Left cardiac atrium (tissue), 4 donors: ENCODE measurements at regions of chr5 and their contacts with region 1.

Region 1: DNA sequence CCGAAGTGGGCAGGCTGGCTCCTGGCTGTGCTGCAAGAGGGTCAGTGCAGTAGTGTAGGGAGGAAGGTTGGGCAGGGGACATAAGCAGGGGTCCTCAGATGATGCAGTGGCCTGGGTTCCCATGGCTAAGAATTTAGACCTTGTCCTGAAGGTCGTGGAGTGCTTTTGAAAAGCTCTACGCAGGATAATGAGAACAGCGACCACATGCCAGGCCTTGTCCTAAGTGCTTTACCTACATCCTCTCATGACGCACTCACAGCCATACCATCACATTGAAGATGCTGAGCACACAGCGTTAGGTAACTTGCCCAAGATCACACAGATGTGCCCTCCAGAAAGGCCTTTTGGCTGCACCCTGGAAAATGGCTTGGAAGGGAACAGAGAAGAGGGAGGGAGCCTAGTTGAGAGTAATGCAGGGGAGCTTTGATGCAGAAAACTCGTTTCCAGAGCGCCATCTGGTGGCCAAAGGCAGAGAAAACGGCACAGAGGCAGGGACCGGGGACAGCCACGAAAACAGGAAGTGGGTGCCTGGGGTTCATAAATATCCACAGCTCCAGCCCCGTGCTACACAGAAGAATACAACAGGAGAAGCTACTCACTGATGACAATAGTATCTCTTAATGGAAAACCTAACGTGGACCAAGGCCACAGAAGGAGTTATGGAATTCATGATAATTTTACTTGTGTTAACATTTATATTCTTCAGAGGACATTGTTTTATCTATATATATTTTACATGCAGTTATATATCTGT is 2.6 kb upstream of the PCDH12 start:
- DNase-seq: peak; percentile 90
- ATAC-seq: peak; percentile 84 to 92

Region 2: DNA sequence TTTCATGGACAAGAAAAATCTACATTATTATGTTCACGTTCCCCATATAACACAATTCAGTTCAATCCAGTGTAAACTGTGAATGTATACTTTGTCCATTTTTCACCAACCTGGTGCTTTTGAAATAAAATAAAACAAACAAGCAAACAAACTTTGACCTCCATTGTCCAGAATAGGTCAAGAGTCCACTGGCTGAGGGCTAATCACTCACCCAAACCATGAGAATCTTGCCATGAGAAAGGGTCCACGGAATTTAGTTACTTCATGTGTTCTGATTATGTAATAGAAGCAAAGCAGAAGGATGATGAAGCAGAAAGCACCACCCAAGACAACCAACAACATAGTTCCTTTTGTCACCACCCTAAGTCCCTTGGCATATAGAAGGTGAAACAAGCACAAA is 370.5 kb before region 1 on chr5:
- intact Hi-C with region 1: no loop called
- DNase-seq: no peak
- ATAC-seq: no peak

Region 3: GRCh38 chr5:141691867-141692532 is 268.6 kb before region 1 on chr5:
- intact Hi-C with region 1: loop called (anchors 1 to 5 kb)
- DNase-seq: peak; percentile 85
- ATAC-seq: peak; percentile 87 to 89

Region 4: GRCh38 chr5:141923448-141924352 is 36.9 kb before region 1 on chr5 and contains the start of gene DELE1:
- intact Hi-C with region 1: loop called in 1 of 2 experiments (anchors 1 kb)
- DNase-seq: peak; percentile 97
- ATAC-seq: peak; percentile 99
- total RNA-seq, gene DELE1: 79.9 to 85.5 TPM